ENCODE measurements at regions of chr15 and their contacts with region 1.

Region 1: GRCh38 chr15:92808978-92809879 is 90.9 kb upstream of the CHD2 start:
- DNase-seq: peak; percentile 99
- H3K4me3 ChIP-seq: peak overlapping the region; percentile 51 to 66 (median 54)
- H3K27ac ChIP-seq: peak overlapping the region; percentile 90 to 98 (median 94)
- H3K4me1 ChIP-seq: peaks cover 0 to 47% (median 34%) of the 10 kb centered on the region in 4 donors
- H3K27me3 ChIP-seq: no peaks in the 10 kb centered on the region
- CTCF ChIP-seq: peak; percentile 68 to 96 (median 96)
- EP300 ChIP-seq: peak in 3 of 4 donors; percentile 20 to 56 (median 55)
- POLR2A ChIP-seq: peak; percentile 69 to 70

Region 2: DNA sequence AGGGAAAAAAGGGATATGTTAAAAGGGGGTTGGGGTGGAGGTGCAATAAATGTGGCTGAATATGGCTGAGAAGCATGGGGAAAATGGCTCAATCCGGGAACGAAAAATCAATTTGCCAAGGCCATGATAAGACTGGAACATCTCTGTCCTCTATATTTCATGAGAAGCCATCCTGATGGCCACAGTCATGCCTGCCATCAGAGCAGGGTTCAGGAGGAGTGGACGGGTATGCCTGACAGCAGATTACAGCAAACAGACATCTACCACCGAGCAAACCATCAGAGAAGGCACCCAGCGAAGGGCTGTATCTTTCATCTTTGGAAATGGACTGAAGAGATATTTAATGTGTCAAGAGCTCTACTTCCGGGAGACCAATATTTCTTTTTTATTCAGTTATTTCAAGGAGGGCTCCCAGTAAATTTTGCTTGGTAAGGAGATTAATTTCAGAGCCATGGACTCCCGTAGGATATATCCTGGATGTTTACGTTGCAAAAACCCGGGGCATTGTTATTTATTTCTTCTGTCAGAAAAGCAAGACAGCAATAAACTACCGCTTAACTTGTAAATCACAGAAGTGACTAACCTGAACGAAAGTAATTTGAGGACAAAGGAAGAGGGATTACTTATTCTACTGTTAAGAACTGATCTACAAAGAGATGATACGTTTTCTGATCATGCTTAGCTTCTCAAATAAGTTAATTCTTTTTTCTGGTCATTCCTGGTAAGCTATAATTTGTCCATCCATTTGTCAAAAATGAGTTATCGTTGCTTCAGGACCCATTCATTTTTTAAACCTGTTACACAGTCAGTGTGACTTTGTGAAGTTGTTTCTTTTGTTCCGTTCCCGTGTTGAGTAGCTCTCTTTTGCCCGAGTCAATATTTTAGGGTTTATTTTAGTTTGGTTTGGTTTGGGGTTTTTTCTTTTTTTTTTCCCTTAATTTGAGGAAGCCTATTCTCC is 10.3 kb after region 1 on chr15:
- intact Hi-C with region 1: loop called (anchors 1 kb)
- DNase-seq: no peak
- H3K4me3 ChIP-seq: peak overlapping the region; percentile 15 to 47 (median 38)
- H3K27ac ChIP-seq: peak overlapping the region; percentile 67 to 85 (median 82)
- H3K4me1 ChIP-seq: peaks cover 0 to 18% (median 17%) of the 10 kb centered on the region in 4 donors
- H3K27me3 ChIP-seq: no peaks in the 10 kb centered on the region
- CTCF ChIP-seq: no peak
- EP300 ChIP-seq: no peak
- POLR2A ChIP-seq: no peak

Region 3: DNA sequence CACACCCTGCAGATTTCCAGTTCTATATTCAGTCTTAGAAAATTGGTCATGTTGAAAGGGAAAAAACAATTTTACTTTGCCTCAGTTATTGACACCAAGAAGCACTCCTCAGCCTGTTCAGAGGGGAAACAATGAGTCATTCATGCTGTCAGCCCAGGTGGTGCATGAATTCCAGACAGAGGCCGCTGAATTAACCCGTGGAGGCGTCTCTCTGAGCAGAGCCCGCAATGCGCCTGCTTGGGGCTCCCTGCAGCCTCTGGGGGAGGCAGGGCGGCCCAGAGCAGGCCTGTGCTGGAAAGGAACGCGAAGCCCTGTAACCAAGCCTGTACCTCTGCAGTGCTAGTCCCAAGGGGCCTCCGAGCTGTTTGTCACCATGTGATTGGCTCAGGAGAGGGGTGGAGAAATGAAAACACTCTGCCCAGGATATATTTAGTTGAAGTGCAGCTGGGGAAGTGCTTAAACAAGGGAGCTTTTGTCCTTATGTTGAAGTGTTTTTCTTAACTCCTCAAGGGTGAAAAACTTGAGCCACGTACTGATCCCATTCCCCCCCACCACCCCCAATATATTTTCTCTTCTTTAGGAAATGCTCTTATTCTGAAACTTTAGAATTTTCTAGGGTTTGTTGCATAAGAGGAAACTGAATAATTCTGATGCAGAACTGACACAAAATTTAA is 22.6 kb after region 1 on chr15:
- intact Hi-C with region 1: loop called (anchors 2 kb)
- DNase-seq: peak; percentile 98
- H3K4me3 ChIP-seq: peak overlapping the region; percentile 17 to 38 (median 30)
- H3K27ac ChIP-seq: peak overlapping the region; percentile 85 to 93 (median 90)
- H3K4me1 ChIP-seq: peaks cover 4 to 41% (median 39%) of the 10 kb centered on the region in 4 donors
- H3K27me3 ChIP-seq: no peaks in the 10 kb centered on the region
- CTCF ChIP-seq: no peak
- EP300 ChIP-seq: peak in 1 of 4 donors; percentile 57
- POLR2A ChIP-seq: peak; percentile 70 to 74

Region 4: GRCh38 chr15:92881802-92882696 is 72.8 kb after region 1 on chr15:
- intact Hi-C with region 1: loop called (anchors 1 kb)
- DNase-seq: peak; percentile 100
- H3K4me3 ChIP-seq: peak overlapping the region; percentile 9 to 99 (median 97)
- H3K27ac ChIP-seq: peak overlapping the region; percentile 99 to 100 (median 100)
- H3K4me1 ChIP-seq: peaks cover 0 to 33% (median 27%) of the 10 kb centered on the region in 4 donors
- H3K27me3 ChIP-seq: no peaks in the 10 kb centered on the region
- CTCF ChIP-seq: no peak
- EP300 ChIP-seq: no peak
- POLR2A ChIP-seq: peak; percentile 94 to 95

Region 5: GRCh38 chr15:92917606-92918407 is 108.6 kb after region 1 on chr15:
- intact Hi-C with region 1: loop called (anchors 1 kb)
- DNase-seq: peak; percentile 98
- H3K4me3 ChIP-seq: peak overlapping the region; percentile 3 to 34 (median 17)
- H3K27ac ChIP-seq: peak overlapping the region; percentile 76 to 95 (median 92)
- H3K4me1 ChIP-seq: peaks cover 0 to 97% (median 86%) of the 10 kb centered on the region in 4 donors
- H3K27me3 ChIP-seq: no peaks in the 10 kb centered on the region
- CTCF ChIP-seq: peak; percentile 83 to 95 (median 90)
- EP300 ChIP-seq: no peak
- POLR2A ChIP-seq: no peak

Region 6: GRCh38 chr15:92979011-92979701 is 169.9 kb after region 1 on chr15:
- intact Hi-C with region 1: loop called (anchors 5 kb)
- DNase-seq: peak; percentile 68
- H3K4me3 ChIP-seq: no peak overlapping the region
- H3K27ac ChIP-seq: peak overlapping the region; percentile 51 to 72 (median 69)
- H3K4me1 ChIP-seq: peaks cover 0 to 37% (median 27%) of the 10 kb centered on the region in 4 donors
- H3K27me3 ChIP-seq: no peaks in the 10 kb centered on the region
- CTCF ChIP-seq: no peak
- EP300 ChIP-seq: no peak
- POLR2A ChIP-seq: no peak

Region 7: DNA sequence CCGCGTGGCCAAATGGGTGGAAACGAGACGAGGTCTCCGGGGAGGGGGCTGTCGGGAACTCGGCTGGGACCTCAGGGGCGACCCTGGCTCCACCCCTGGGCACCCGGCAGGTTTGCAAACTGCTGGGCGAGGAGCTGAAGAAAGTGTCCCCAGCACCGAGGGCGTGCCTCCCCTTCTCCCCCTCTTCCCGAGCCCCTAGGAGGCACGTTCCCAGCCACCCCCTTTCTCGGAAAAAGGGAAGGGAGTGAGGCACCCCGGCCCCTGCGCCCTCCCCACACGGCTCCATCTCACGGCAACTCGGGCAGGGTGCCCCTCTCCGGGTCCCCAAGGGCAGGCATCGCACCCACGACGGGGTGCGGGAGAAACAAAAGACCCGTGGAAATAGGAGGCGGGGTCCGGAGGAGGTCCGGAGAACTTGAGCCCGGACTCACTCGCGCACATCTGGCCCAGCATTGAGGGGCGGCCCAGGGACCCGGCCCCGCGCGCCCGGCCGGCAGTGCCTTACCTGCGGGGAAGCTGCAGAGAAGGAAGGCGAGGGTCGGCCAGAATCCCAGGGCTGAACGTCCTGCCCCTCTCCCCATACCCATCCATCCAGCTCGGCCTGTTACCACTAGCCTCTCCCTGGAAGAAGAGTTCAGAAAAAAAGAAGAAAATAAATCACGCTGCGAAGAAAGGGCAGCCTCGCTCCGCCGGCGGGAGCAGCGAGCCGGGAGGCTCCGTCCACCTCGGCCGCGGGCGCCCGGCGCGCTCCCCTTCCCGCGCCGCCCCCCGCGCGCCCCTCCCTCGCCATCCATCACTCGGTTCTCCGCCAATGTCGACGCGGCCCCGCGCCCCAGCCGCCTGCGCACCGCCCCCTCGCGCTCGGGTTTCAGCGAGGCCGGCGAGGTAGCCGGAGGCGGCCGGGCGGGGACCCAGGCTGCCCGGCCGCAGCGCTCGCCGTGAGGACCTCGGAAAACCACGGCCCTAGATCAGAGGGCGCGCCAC is 263.5 kb after region 1 on chr15:
- intact Hi-C with region 1: loop called (anchors 5 kb)
- DNase-seq: peak; percentile 94
- H3K4me3 ChIP-seq: peak overlapping the region; percentile 85 to 99 (median 88)
- H3K27ac ChIP-seq: peak overlapping the region; percentile 96 to 98 (median 97)
- H3K4me1 ChIP-seq: peaks cover 0 to 77% (median 59%) of the 10 kb centered on the region in 4 donors
- H3K27me3 ChIP-seq: no peaks in the 10 kb centered on the region
- CTCF ChIP-seq: no peak
- EP300 ChIP-seq: no peak
- POLR2A ChIP-seq: peak; percentile 33 to 41

Measured in sigmoid colon (tissue), 7 donors.